ENCODE measurements at regions of chr18 and their contacts with region 1.

Region 1: GRCh38 chr18:26989842-26990241 is 124.3 kb upstream of the AQP4 start:
- DNase-seq: no peak
- ATAC-seq: no peak
- H3K4me3 ChIP-seq: no peak overlapping the region
- H3K27ac ChIP-seq: no peak overlapping the region
- H3K4me1 ChIP-seq: no peaks in the 10 kb centered on the region
- H3K27me3 ChIP-seq: no peaks in the 10 kb centered on the region
- CTCF ChIP-seq: no peak

Region 2: DNA sequence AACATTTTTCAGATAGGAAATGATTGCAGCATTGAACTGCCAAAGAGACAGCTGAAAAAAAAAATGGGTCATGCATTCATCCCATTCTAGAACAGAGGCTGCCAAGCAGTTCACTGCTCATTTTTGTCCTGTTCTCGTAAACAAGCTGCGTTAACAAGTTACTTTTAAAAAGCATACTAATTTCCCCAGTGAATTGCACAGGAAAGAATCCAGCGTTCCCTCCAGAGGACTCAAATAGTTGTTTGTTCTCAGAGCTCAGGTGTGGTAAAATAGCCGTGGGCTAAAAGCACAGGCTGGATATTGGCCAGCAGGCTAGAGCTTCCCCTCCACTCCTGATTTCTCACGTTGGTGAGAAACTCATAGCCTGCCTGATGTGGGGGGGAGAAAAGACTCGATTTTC is 48.3 kb before region 1 on chr18:
- intact Hi-C with region 1: loop called in 1 of 10 experiments (anchors 5 kb)
- DNase-seq: no peak
- ATAC-seq: no peak
- H3K4me3 ChIP-seq: no peak overlapping the region
- H3K27ac ChIP-seq: no peak overlapping the region
- H3K4me1 ChIP-seq: peaks cover 0 to 4% (median 0%) of the 10 kb centered on the region in 9 donors
- H3K27me3 ChIP-seq: no peaks in the 10 kb centered on the region
- CTCF ChIP-seq: no peak